ENCODE measurements at regions of chr12 and their contacts with region 1.

Region 1: DNA sequence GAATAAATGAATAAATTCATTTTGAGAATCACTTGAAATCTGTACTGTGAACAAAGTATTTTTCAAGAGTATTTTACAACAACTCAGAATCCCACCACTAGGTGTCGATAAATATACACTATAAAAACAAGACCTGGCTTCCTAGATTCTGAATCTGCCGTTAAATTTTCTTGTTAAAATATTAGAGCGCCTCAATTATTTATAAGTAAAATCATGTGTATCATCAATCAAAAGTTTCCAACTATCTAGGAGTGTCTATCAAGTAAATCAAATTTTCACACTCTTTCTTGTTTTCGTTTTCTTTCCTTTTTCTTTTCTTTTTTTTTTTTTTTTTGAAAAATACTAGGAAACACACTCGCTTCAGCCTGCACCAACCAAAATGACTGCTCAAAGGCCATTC is 179.2 kb upstream of the DCN start:
- DNase-seq: peak; percentile 73
- ATAC-seq: no peak
- H3K4me3 ChIP-seq: no peak overlapping the region
- H3K27ac ChIP-seq: no peak overlapping the region
- H3K4me1 ChIP-seq: no peaks in the 10 kb centered on the region
- H3K27me3 ChIP-seq: no peaks in the 10 kb centered on the region
- CTCF ChIP-seq: peak; percentile 73

Region 2: DNA sequence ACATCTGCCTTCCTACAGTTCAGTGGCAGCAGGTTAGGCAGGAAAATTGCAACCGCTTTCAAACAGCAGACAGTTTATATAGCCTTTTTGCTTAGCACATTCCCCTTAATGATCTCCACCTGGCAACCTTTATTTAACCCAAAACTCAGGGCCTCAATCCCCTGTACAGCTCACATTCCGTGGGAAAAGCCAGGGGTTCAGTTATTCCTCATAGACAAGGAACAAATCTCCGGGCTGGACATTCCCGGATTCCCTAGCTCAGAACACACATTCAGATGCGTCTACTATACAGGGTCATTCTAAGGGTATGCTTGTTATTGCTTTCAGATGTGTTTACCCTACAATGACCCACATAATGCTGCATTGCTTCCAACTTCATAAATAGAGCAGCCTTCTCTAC is 105.5 kb before region 1 on chr12:
- CTCF ChIA-PET with region 1: no interaction called
- POLR2A ChIA-PET with region 1: no interaction called
- intact Hi-C with region 1: no loop called
- DNase-seq: no peak
- ATAC-seq: no peak
- H3K4me3 ChIP-seq: no peak overlapping the region
- H3K27ac ChIP-seq: no peak overlapping the region
- H3K4me1 ChIP-seq: no peaks in the 10 kb centered on the region
- H3K27me3 ChIP-seq: peaks cover 16% of the 10 kb centered on the region; the same call in 1 of the 2 replicates
- CTCF ChIP-seq: no peak

Region 3: GRCh38 chr12:91413581-91414546 is 52.0 kb after region 1 on chr12:
- CTCF ChIA-PET with region 1: no interaction called
- POLR2A ChIA-PET with region 1: no interaction called
- intact Hi-C with region 1: no loop called
- DNase-seq: peak; percentile 95
- ATAC-seq: peak; percentile 99
- H3K4me3 ChIP-seq: peak overlapping the region; percentile 1; the same call in 1 of the 2 replicates
- H3K27ac ChIP-seq: peak overlapping the region; percentile 67
- H3K4me1 ChIP-seq: peaks cover 18% of the 10 kb centered on the region
- H3K27me3 ChIP-seq: no peaks in the 10 kb centered on the region
- CTCF ChIP-seq: no peak

Region 4: DNA sequence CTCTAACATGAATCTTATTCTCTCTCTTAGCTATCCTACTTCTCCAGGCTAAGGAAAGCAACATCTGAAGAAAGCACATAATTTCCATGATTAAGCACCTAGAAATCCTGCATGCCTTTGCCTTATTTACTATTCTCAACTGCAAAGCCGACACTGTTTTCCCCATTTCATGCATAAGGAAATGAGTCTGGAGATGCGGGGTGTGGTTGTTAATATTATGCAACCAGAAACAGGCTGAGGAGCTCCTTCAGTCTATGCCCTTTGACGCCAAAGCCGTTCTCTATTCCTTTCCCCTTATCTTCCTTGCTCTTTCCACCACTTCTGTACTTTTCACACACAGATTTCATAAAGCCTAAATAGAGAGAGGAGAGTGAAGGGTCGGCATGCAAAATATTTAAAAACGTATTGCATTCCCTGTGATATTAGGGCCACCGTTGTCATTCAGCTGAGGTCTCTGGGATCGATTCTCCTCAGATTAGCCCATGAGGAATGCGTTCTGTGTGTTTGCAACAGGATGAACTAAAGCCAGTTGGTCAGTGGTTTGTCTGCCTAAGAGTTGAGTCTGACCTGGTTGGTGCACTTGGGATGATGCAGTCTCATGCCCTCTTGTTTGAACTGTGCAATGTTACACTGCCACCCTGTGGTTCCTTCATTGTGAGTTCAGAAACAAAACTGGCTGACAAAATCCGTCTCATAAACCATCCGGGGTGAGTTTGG is 1287.8 kb after region 1 on chr12:
- CTCF ChIA-PET with region 1: interaction called, 3 read pairs
- POLR2A ChIA-PET with region 1: no interaction called
- intact Hi-C with region 1: loop called (anchors 2 kb)
- DNase-seq: peak; percentile 85
- ATAC-seq: peak; percentile 98
- H3K4me3 ChIP-seq: no peak overlapping the region
- H3K27ac ChIP-seq: no peak overlapping the region
- H3K4me1 ChIP-seq: peaks cover 27% of the 10 kb centered on the region
- H3K27me3 ChIP-seq: no peaks in the 10 kb centered on the region
- CTCF ChIP-seq: peak; percentile 91